ENCODE measurements at regions of chr13 and their contacts with region 1.

Region 1: DNA sequence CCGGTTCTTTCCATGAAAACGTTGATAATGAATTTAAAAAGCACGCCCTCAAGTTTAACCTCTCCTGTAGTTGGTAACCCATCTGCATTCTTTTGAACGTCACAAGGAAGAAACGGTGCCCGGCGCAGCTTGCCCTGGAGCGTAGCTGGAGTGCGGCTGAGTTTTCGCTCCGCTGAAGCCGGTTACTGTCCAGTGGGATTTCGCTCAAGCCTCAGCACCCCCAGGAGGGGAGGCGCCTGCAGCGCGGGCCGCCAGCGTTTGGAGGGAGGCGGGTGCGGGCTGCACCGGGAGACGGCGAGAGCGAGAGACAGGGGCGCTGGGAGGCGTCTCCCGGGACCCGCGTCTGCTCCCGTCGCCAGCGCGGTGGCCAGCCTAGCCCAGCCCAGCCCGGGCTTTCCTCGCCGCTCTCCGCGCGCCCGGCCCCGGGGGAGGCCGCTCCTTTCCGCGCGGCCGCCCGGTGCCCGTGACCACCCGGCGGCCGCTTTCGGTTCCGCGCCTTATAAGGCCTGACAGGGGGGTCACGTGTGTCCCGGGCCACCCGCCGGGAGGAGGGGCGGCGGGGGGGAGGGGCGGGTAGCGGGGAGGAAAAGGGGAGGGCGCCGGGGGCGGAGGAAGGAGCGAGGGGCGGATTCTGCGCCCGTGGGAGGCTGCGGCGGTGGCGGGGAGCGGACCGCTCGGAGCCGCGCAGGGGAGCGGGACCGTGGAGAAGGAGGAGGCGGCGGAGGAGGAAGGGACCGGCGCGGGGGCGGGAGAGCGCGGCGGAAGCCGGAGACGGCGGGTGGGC is 8.3 kb upstream of the DGKH start:
- DNase-seq: peak; percentile 63 to 96 (median 91)

Region 2: GRCh38 chr13:41960639-41961465 is 79.3 kb before region 1 on chr13 and contains the start of gene VWA8:
- intact Hi-C with region 1: loop called (anchors 5 kb)
- DNase-seq: peak; percentile 53 to 92 (median 78)

Measured in head of caudate nucleus (tissue), 42 donors.